ENCODE measurements at regions of chr21 and their contacts with region 1.

Region 1: DNA sequence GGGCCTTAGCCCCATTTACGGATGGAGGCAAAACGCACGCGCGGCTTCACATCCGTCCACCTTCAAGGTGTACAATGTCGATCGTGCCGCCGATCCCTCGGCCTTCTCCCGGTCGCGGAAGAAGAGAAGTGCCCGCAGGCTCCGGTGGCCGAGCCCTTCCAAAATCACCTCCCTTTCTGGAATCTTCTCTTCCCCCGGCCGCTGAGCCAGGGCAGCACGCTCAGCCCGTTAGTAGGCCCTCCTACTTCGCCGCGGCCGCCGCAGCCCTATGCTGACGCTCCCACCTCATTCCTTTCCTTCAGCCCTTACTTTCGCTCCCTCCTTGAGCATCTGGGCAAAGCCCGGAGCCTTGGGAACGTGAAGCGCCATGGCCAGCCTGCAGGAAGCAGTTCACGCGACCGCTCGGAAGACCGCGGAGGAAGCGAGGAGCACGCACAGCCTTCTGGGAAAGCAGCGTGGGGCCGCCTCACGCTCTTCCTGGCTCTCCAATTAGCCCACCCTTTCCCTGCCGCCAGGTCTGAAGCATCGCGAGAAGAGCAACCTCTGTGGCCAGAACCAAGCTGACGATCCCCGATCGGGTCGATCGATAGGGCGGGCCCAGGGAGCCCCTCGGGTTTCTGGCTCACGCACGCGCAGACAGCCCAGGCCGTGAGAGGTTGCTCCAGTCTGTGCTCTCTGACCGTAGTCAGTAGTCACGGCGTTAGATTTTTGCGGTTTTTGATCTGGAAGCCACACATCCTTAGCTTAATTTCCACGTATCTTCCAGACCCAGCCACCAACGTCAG is at the start of gene CCT8:
- DNase-seq: peak; percentile 98 to 99 (median 99)
- H3K4me3 ChIP-seq: peak within 1 kb of the TSS; percentile 83 to 98 (median 89)
- H3K4me3 Mint-ChIP-seq: peak within 1 kb of the TSS; percentile 99 to 100
- H3K27ac ChIP-seq: peak within 1 kb of the TSS; percentile 89 to 96
- H3K27ac Mint-ChIP-seq: peak within 1 kb of the TSS; percentile 94 to 99 (median 98)
- H3K4me1 ChIP-seq: peaks cover 40 to 53% of the 10 kb centered on the region in 2 donors
- H3K4me1 Mint-ChIP-seq: peaks cover 41% of the 10 kb centered on the region
- H3K27me3 ChIP-seq: no peaks in the 10 kb centered on the region
- H3K27me3 Mint-ChIP-seq: peaks cover 0 to 2% (median 0%) of the 10 kb centered on the region in 3 donors
- CTCF ChIP-seq: no peak
- polyA plus RNA-seq, gene CCT8: 71.9 to 173 (median 169) TPM

Region 2: GRCh38 chr21:29365661-29366265 is 292.3 kb after region 1 on chr21:
- intact Hi-C with region 1: loop called in 1 of 2 experiments (anchors 5 kb)
- DNase-seq: no peak
- H3K4me3 ChIP-seq: no peak overlapping the region
- H3K4me3 Mint-ChIP-seq: no peak overlapping the region
- H3K27ac ChIP-seq: no peak overlapping the region
- H3K27ac Mint-ChIP-seq: peak overlapping the region in 2 of 7 donors; percentile 42 to 43
- H3K4me1 ChIP-seq: no peaks in the 10 kb centered on the region
- H3K4me1 Mint-ChIP-seq: peaks cover 4% of the 10 kb centered on the region
- H3K27me3 ChIP-seq: no peaks in the 10 kb centered on the region
- H3K27me3 Mint-ChIP-seq: no peaks in the 10 kb centered on the region
- CTCF ChIP-seq: no peak

Region 3: DNA sequence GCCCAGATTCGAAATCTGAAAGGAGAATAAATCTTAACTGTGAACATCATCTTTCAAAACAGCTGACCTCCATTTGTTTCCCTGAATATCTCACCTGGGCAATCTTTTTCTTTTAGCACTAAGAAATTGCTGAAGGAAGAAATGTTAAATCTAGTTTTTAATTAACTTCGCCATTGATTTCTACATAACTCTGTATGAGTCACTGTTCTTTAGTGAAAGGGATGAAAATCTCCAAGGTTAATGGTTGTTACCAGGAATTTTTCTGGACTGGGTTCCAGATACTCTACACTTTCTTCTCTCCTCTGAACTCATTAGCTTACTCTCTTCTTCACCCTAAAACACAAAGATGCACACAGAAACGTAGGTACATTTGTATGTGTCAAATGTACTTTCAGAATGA is 461.0 kb after region 1 on chr21:
- intact Hi-C with region 1: no loop called
- DNase-seq: no peak
- H3K4me3 ChIP-seq: no peak overlapping the region
- H3K4me3 Mint-ChIP-seq: no peak overlapping the region
- H3K27ac ChIP-seq: no peak overlapping the region
- H3K27ac Mint-ChIP-seq: no peak overlapping the region
- H3K4me1 ChIP-seq: no peaks in the 10 kb centered on the region
- H3K4me1 Mint-ChIP-seq: peaks cover 8% of the 10 kb centered on the region
- H3K27me3 ChIP-seq: no peaks in the 10 kb centered on the region
- H3K27me3 Mint-ChIP-seq: peaks cover 0 to 1% (median 0%) of the 10 kb centered on the region in 3 donors
- CTCF ChIP-seq: no peak